HepG2 (cell line): ENCODE measurements at regions of chrX and their contacts with region 1.

Region 1: GRCh38 chrX:137354851-137355250 is 211.1 kb upstream of the ZIC3 start:
- DNase-seq: no peak
- ATAC-seq: no peak
- H3K4me3 ChIP-seq: no peak overlapping the region
- H3K27ac ChIP-seq: no peak overlapping the region
- H3K4me1 ChIP-seq: no peaks in the 10 kb centered on the region
- H3K27me3 ChIP-seq: no peaks in the 10 kb centered on the region
- CTCF ChIP-seq: no peak
- EP300 ChIP-seq: no peak
- POLR2A ChIP-seq: no peak
- RAD21 ChIP-seq: no peak

Region 2: DNA sequence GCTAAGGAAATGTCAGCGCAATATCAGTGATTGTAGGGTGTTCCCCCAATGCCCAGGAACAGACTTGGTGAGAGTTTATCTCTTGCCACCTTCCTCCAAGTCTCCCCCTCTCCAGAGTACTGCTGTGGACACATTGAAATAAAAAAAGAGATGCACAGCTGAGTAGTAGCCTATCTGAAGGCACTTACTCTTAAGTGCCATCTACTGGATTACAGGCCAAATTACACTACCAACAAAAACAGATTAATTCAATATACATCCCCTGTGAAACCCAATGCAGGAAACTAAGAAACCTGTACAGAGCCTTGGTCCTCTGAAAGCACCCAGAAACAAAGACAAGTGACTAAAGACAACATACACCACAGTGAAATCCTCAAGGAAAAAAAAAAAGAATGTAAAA is 671.4 kb after region 1 on chrX:
- CTCF ChIA-PET with region 1: no interaction called
- POLR2A ChIA-PET with region 1: no interaction called
- in situ Hi-C with region 1: no loop called
- intact Hi-C with region 1: loop called (anchors 5 kb)
- DNase-seq: no peak
- ATAC-seq: peak; percentile 43; the same call in 2 of the 3 replicates
- H3K4me3 ChIP-seq: no peak overlapping the region
- H3K27ac ChIP-seq: no peak overlapping the region
- H3K4me1 ChIP-seq: no peaks in the 10 kb centered on the region
- H3K27me3 ChIP-seq: no peaks in the 10 kb centered on the region
- CTCF ChIP-seq: no peak
- EP300 ChIP-seq: no peak
- POLR2A ChIP-seq: no peak
- RAD21 ChIP-seq: no peak